K562 (cell line): ENCODE measurements at regions of chr17 and their contacts with region 1.

Region 1: DNA sequence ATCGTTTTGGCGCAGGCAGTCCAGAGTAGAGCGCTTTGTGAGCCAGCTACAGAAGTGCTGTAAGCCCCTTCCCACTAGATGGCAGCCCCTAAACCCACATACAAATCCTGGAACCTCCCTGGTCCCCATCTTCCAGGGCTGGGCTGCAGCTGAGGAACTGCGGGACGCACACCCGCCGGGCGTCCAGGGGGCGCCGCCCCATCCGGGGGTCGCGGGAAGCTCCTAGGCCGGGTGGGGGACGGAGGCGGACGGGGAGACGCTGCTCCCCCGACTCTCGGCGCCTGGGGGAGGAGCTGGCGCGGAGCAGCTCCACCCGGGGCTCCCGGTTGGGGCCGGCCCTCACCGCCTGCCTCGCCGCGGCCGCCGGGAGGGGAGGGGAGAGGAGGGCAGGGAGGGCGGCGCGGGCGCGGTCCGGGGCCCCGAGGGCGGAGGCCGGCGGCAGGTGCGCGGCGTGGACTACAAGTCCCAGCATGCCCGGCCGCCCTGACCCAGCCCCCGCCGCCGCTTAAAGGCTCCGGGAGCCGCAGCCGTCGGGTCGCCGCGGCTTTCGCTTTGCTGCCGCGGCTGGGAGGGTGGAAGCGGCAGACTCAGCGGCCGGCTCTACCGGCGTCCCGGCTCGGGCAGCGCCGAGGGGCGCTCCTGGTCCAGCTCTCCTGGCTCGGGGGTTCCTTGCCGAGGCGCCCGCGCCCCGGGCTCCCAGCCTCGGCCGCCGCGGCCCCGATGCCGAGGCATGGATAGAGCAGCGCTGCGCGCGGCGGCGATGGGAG is at the start of gene KSR1:
- DNase-seq: peak; percentile 91 to 94 (median 92)
- ATAC-seq: peak; percentile 92
- H3K4me3 ChIP-seq: peak within 1 kb of the TSS; percentile 88
- H3K27ac ChIP-seq: peak within 1 kb of the TSS; percentile 58; the same call in 2 of the 3 replicates
- H3K4me1 ChIP-seq: peaks cover 37 to 41% of the 10 kb centered on the region in 2 experiments; a peak in 4 of 5 replicates
- H3K27me3 ChIP-seq: no peaks in the 10 kb centered on the region
- CTCF ChIP-seq: peak; percentile 54 to 64 (median 62)
- EP300 ChIP-seq: no peak
- POLR2A ChIP-seq: peak; percentile 64
- RAD21 ChIP-seq: peak; percentile 56 to 78
- polyA plus RNA-seq, gene KSR1: 1.4 TPM

Region 2: DNA sequence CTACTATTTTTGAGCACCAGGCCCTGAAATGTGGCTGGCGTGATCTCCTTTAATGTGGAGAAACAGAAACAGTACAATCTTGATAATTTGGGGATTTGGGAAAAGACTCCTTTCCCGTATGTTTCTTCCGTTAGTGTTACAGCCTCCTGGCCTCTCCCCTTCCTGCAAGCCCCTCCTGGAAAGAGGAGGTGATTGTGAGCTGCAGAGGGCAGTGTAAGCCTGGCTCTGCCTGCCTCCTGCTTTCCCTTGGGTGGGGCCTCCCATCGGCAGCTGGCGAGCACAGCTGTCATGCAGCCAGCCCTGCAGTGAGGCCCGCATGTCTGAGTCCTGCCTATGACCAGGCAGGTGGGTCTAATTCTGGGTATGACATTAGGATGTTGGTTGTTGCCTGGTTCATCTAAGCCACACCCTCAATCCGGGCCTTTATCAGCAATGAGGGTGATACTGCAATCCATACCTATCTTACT is 210.8 kb before region 1 on chr17:
- CTCF ChIA-PET with region 1: no interaction called
- POLR2A ChIA-PET with region 1: no interaction called
- in situ Hi-C with region 1: no loop called
- intact Hi-C with region 1: loop called (anchors 10 kb)
- DNase-seq: peak; percentile 84 to 90 (median 88)
- ATAC-seq: peak; percentile 100
- H3K4me3 ChIP-seq: no peak overlapping the region
- H3K27ac ChIP-seq: no peak overlapping the region
- H3K4me1 ChIP-seq: peaks cover 7 to 13% of the 10 kb centered on the region in 2 experiments; a peak in 4 of 5 replicates
- H3K27me3 ChIP-seq: no peaks in the 10 kb centered on the region; a peak in 1 of 5 replicates
- CTCF ChIP-seq: peak; percentile 95 to 97 (median 96)
- EP300 ChIP-seq: no peak
- POLR2A ChIP-seq: no peak
- RAD21 ChIP-seq: peak; percentile 98 to 99

Region 3: DNA sequence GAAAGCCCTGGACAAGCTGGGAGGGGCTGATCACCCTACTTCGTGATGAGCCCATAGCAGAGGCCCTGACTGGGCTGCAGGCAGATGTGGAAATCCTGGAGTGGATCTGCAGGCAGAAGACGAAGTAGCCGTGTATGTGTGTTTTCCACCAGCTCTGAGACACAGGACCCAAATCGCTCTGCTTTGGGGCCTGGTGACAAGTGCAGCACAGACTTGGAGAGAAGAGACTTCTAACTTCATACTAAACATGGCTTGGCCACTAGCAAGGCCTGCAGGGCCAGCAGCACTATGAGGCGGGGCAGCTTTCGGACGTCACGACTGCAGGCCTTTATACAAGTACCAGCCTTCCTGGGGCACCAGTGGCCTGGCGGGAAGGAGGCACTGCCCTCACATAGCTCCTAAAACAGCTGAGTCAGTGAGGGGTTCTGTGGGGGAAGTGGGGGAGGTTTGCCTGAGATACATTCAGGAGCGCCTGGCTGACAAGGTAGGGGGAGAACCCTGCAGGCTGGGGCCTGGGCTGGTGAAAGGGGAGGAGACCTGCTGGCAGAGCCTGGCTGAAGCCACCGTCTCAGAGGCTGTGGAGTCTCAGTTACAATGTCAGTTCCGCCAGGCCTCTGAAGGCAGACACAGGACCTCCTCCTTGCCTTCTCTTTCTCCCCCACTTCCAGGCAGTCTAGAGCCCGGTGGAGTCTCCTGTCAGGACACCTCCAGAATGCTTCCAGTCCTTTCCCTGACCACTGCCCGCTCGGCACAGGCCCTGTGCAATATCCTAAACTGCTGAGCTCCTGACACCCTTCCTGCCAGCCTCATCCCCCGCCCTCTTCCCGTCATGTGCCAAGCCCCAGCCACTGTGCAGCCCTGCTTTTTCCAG is 88.7 kb before region 1 on chr17:
- CTCF ChIA-PET with region 1: no interaction called
- POLR2A ChIA-PET with region 1: interaction called, 3 read pairs
- in situ Hi-C with region 1: no loop called
- intact Hi-C with region 1: loop called (anchors 5 kb)
- DNase-seq: no peak
- ATAC-seq: peak; percentile 32
- H3K4me3 ChIP-seq: no peak overlapping the region
- H3K27ac ChIP-seq: peak overlapping the region; percentile 7; the same call in 1 of the 3 replicates
- H3K4me1 ChIP-seq: peaks cover 21 to 27% of the 10 kb centered on the region in 2 experiments
- H3K27me3 ChIP-seq: no peaks in the 10 kb centered on the region
- CTCF ChIP-seq: no peak
- EP300 ChIP-seq: no peak
- POLR2A ChIP-seq: no peak
- RAD21 ChIP-seq: no peak

Region 4: DNA sequence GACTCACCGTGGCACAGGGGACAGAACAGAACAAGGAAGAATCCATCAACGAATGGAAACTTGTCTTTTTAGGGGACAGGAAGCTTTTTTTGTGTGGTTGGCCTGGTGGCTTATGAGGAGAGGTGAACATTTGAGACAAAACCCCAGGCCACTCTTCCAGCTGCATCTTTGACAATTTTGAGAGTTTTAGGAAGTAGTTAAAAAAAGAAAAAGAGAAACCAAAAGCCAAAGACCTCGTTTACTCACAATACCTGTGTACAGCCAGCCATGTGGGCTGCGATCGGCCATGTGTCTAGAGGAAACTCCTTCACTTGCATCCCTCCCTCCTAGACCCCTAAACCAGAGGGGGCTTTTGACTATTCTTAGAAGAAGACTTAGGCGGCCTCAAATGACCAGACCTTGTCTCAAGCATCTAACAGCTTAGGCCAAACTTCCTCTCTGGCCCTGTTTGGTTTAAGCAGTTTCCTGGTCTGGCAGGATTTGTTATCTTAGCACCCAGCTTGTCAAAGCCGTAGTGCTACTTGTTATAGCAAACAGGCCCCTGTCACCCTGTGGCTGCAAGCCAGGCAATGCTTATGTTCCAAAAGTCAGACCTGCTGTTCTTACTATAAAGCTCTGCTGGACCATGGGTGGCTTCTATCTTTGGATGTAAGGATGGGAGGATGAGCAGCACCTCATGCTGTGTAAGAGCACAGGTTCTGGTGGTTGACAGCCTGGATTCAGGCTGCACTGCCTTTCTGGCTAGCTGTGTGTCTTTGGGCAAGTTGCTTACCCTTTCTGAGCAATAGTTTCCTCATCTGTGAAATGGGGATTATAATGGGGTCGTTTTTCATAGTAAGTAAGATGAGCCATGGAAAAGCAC is 17.9 kb after region 1 on chr17:
- CTCF ChIA-PET with region 1: no interaction called
- POLR2A ChIA-PET with region 1: interaction called, 40 read pairs
- in situ Hi-C with region 1: no loop called
- intact Hi-C with region 1: no loop called
- DNase-seq: peak; percentile 75 to 96 (median 86)
- ATAC-seq: peak; percentile 87
- H3K4me3 ChIP-seq: no peak overlapping the region
- H3K27ac ChIP-seq: peak overlapping the region; percentile 79
- H3K4me1 ChIP-seq: peaks cover 67 to 79% of the 10 kb centered on the region in 2 experiments
- H3K27me3 ChIP-seq: no peaks in the 10 kb centered on the region
- CTCF ChIP-seq: no peak
- EP300 ChIP-seq: peak; percentile 97
- POLR2A ChIP-seq: no peak; the same call in 1 of the 2 replicates
- RAD21 ChIP-seq: peak in 1 of 2 experiments; percentile 41; a peak in 2 of 4 replicates

Region 5: DNA sequence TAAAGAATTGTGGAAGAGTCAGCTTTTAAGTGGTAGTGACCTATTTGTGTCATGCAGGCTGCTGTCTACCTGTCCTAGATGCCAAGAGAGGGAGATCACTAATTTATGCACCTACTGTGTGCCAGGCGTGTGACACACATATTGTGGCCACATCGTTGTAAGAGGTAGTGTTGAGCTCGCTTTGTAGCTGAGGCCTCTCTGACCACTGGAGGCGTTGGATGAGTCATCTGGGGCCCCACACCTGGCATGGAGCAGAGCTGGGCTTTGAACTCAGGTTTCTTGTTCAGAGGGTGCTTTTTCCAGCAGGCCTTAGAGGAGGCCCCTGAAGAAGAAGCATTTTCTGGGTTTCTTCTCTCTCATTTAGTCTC is 122.6 kb after region 1 on chr17:
- CTCF ChIA-PET with region 1: no interaction called
- POLR2A ChIA-PET with region 1: interaction called, 7 read pairs
- in situ Hi-C with region 1: no loop called
- intact Hi-C with region 1: loop called (anchors 2 kb)
- DNase-seq: peak; percentile 51 to 78 (median 56)
- ATAC-seq: no peak; the same call in 2 of the 3 replicates
- H3K4me3 ChIP-seq: no peak overlapping the region
- H3K27ac ChIP-seq: peak overlapping the region; percentile 92
- H3K4me1 ChIP-seq: peaks cover 45 to 68% of the 10 kb centered on the region in 2 experiments
- H3K27me3 ChIP-seq: no peaks in the 10 kb centered on the region
- CTCF ChIP-seq: 0 out of 6 replicates have a peak, but pooled peaks of 2 of the 3 experiments have one; percentile 26 to 32
- EP300 ChIP-seq: no peak
- POLR2A ChIP-seq: no peak
- RAD21 ChIP-seq: peak in 1 of 2 experiments; percentile 16; a peak in 1 of 4 replicates